A549 (cell line): ENCODE measurements at regions of chr19 and their contacts with region 1.

Region 1: DNA sequence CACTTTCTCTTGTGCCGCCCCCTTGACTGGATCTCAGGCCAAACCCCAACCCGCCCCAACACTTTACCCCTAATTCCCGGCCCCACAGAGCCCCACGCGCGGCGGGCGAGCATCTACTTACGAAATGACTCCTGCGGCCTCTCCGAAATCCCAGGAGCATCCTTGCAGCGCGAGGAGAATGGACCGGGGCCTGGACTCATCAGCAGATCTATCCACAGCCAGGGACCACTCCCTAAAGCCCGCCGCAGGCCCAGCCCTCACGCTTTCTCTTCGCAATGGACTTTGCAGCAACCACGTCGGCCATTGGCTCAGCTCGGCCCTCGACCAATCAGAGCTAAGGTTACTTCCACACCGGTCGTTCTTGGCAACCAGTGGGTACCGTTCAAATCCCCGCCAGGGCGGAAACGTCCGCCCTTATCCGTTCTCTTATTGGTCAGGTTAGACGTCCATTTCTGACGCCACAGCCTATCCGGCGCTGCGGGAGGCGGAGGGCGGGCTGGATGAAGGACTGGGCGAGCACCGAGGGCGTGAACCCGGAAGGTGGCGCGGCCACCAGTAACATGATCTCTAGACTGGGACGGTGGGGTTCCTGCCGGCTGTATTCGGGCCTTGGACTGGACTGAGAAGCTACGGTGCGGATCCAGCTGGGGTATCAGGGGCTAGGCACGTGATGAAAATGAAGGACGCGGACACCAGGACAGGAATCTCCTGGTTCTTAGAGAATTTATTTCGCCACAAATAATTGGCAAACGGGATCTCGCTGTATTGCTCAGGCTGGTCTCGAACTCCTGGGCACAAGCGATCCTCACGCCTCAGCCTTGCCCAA is at the starts of genes CEP89 and FAAP24:
- DNase-seq: peak; percentile 100
- ATAC-seq: peak; percentile 96 to 98
- H3K4me3 ChIP-seq: peak within 1 kb of the TSS; percentile 60
- H3K27ac ChIP-seq: peak within 1 kb of the TSS; percentile 75 to 89
- H3K4me1 ChIP-seq: peaks cover 19% of the 10 kb centered on the region
- CTCF ChIP-seq: no peak
- EP300 ChIP-seq: 0 out of 5 replicates have a peak, but pooled peaks of 1 of the 2 experiments have one; percentile 34
- POLR2A ChIP-seq: peak; percentile 88
- RAD21 ChIP-seq: peak in 1 of 2 experiments; percentile 18; a peak in 1 of 5 replicates
- polyA plus RNA-seq, gene CEP89: 31.5 and 45.3 TPM in 2 replicates
- polyA plus RNA-seq, gene FAAP24: 14.4 and 15.9 TPM in 2 replicates

Region 2: GRCh38 chr19:32909257-32909656 is 62.7 kb before region 1 on chr19:
- CTCF ChIA-PET with region 1: no interaction called
- POLR2A ChIA-PET with region 1: no interaction called
- DNase-seq: no peak
- ATAC-seq: no peak
- H3K4me3 ChIP-seq: no peak overlapping the region
- H3K27ac ChIP-seq: no peak overlapping the region
- H3K4me1 ChIP-seq: no peaks in the 10 kb centered on the region
- CTCF ChIP-seq: no peak
- EP300 ChIP-seq: no peak
- POLR2A ChIP-seq: no peak
- RAD21 ChIP-seq: no peak

Region 3: GRCh38 chr19:33010891-33011576 is 39.1 kb after region 1 on chr19:
- CTCF ChIA-PET with region 1: interaction called, 13 read pairs
- POLR2A ChIA-PET with region 1: no interaction called
- DNase-seq: no peak
- ATAC-seq: no peak
- H3K4me3 ChIP-seq: no peak overlapping the region
- H3K27ac ChIP-seq: no peak overlapping the region
- H3K4me1 ChIP-seq: no peaks in the 10 kb centered on the region
- CTCF ChIP-seq: no peak
- EP300 ChIP-seq: no peak
- POLR2A ChIP-seq: no peak
- RAD21 ChIP-seq: no peak

Region 4: DNA sequence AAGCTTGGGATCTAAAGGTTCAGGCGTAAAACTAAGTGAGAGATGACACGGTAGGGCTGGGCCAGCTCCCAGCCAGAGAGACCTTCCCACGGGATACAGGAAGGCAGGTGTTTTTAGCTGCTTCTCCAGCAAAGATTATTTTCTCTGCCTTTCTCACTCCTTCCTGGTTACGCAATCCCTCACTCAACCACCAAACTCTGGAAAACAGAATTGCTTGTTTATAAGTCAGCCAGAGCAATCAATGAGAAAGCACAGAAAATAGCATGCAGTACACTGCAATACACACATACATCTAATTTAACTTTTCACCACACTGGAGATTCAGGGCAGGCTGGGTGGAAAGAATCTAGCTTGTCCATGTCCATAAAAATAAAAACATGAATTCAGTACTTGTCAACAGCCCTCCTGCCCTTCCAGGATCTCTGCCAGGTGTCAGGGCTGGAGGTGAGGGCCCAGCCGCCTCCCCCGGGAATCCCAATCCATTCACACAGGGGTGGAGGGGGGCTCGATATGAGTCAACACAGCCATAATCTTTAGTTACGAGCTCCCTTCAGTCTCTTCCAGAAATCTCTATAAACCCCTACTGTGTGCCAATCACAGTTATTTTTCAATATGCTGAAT is 80.5 kb after region 1 on chr19:
- CTCF ChIA-PET with region 1: interaction called, 17 read pairs
- POLR2A ChIA-PET with region 1: no interaction called
- DNase-seq: peak in 1 of 2 experiments; percentile 66
- ATAC-seq: peak; percentile 19 to 45
- H3K4me3 ChIP-seq: no peak overlapping the region
- H3K27ac ChIP-seq: peak overlapping the region; percentile 49 to 77
- H3K4me1 ChIP-seq: peaks cover 88% of the 10 kb centered on the region
- CTCF ChIP-seq: no peak
- EP300 ChIP-seq: no peak
- POLR2A ChIP-seq: no peak
- RAD21 ChIP-seq: no peak; a peak in 1 of 5 replicates

Region 5: DNA sequence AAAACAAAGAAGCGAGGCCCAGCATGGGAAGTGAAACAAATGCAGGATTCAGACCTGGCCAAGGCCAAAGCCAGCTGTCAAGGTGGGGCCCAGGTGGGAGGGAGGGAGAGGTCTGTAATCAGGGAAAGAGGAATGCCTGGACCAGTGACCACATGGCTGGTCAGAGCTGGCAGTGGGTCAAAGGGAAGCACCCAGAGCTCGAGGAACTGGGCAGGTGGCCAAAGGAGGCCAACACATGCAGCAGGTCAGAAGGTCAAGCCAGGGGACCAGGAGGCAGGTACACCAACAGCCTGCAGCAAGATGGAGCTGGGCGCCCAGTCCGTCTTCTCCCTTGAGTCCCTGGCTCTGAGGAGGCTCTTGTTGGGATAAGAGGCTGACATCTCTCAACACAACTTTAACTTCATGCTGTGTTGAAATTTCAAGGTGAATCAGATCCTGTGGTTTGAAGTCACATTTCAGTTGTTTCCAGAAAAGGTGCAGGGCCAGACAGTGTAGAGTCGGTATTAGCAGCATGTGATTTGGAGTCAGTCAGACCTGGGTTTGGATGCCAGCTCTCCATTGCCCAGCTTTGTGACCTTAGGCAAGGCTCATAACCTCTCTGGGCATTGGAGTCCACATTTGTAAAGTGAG is 126.2 kb after region 1 on chr19:
- CTCF ChIA-PET with region 1: interaction called, 71 read pairs
- POLR2A ChIA-PET with region 1: interaction called, 3 read pairs
- DNase-seq: peak in 1 of 2 experiments; percentile 40
- ATAC-seq: peak; percentile 9 to 27; a peak in 3 of 6 replicates
- H3K4me3 ChIP-seq: no peak overlapping the region
- H3K27ac ChIP-seq: peak overlapping the region in 1 of 2 experiments; percentile 35; a peak in 3 of 6 replicates
- H3K4me1 ChIP-seq: peaks cover 36% of the 10 kb centered on the region
- CTCF ChIP-seq: no peak
- EP300 ChIP-seq: no peak
- POLR2A ChIP-seq: no peak
- RAD21 ChIP-seq: no peak

Region 6: DNA sequence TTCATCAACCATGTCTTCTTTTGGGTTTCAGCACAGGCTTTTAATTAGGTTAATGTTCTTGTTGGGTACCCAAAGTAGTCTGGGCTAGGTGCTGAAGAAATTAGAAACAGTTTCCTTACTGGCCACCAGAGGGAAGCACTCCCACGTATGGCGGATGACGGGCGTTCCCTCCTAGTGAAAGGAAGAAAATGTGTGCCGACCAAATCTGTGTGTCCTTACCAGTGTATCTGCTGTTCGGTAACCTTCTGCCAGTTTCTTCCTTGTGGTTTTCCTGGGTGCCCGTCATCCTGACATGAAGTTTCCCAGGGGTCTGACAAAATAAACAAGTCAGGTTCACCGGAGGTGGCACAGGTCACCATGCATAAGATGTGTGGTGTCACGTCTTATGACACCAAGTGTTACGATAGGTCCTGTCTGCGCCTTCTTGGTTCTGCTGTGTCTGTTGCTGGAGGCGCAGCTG is 154.0 kb after region 1 on chr19:
- CTCF ChIA-PET with region 1: interaction called, 169 read pairs
- POLR2A ChIA-PET with region 1: interaction called, 3 read pairs
- DNase-seq: peak; percentile 85 to 97
- ATAC-seq: peak; percentile 95 to 96
- H3K4me3 ChIP-seq: no peak overlapping the region
- H3K27ac ChIP-seq: 0 out of 6 replicates have a peak overlapping the region, but pooled peaks of 1 of the 2 experiments have one; percentile 17
- H3K4me1 ChIP-seq: no peaks in the 10 kb centered on the region
- CTCF ChIP-seq: peak; percentile 98
- EP300 ChIP-seq: no peak
- POLR2A ChIP-seq: no peak
- RAD21 ChIP-seq: peak; percentile 85 to 86

Region 7: GRCh38 chr19:33176670-33177416 is 204.9 kb after region 1 on chr19:
- CTCF ChIA-PET with region 1: interaction called, 12 read pairs
- POLR2A ChIA-PET with region 1: interaction called, 16 read pairs
- DNase-seq: peak; percentile 100
- ATAC-seq: peak; percentile 84 to 94
- H3K4me3 ChIP-seq: peak overlapping the region; percentile 65
- H3K27ac ChIP-seq: peak overlapping the region; percentile 89 to 91
- H3K4me1 ChIP-seq: peaks cover 19% of the 10 kb centered on the region
- CTCF ChIP-seq: no peak
- EP300 ChIP-seq: no peak
- POLR2A ChIP-seq: peak; percentile 100
- RAD21 ChIP-seq: 0 out of 5 replicates have a peak, but pooled peaks of 1 of the 2 experiments have one; percentile 16